T-cell (primary cell): ENCODE measurements at regions of chr6 and their contacts with region 1.

Region 1: DNA sequence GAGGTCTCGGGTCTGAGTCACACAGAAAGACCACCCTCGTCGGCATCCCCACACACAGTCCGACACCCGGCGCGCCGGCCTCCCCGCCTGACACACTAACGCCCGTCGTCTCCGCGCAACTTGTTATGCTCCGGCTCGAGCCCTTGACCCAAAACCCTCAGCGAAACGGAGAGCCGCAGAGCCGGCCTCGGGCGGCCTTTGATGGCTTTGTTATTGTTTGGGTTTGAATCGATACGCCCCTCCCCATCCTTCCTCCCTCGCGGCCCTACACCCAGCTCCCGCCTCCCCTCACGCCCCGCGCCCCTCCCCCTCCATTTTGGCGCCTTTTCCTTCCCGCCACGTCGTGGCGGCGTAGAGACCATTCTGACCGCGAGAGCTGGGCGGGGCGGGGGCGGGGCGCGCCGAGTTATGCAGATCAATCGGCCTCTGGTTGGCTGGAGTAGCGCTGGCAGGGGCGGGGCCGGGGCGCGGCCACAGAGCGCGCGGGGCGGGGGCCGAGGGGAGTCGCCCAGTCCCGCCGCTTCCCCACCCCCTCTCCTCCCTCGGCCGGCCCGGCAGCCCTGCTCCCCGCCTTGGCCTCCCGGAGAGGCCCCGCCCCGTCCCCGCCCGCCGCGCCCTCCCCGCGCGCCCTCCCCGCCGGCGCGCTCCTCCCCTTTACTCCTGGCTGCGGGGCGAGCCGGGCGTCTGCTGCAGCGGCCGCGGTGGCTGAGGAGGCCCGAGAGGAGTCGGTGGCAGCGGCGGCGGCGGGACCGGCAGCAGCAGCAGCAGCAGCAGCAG is at the start of gene PIM1:
- DNase-seq: peak; percentile 89 to 100 (median 99)
- ATAC-seq: peak; percentile 79 to 88 (median 82)
- H3K4me3 ChIP-seq: peak within 1 kb of the TSS; percentile 78 to 90
- H3K4me3 Mint-ChIP-seq: peak within 1 kb of the TSS; percentile 90 to 93 (median 92)
- H3K27ac ChIP-seq: peak within 1 kb of the TSS; percentile 77
- H3K27ac Mint-ChIP-seq: peak within 1 kb of the TSS; percentile 95 to 99
- H3K4me1 ChIP-seq: peaks cover 19 to 36% of the 10 kb centered on the region in 2 experiments
- H3K4me1 Mint-ChIP-seq: peaks cover 37 to 39% (median 39%) of the 10 kb centered on the region in 3 donors
- H3K27me3 ChIP-seq: no peaks in the 10 kb centered on the region
- H3K27me3 Mint-ChIP-seq: no peaks in the 10 kb centered on the region
- total RNA-seq, gene PIM1: 225 to 334 (median 313) TPM

Region 2: DNA sequence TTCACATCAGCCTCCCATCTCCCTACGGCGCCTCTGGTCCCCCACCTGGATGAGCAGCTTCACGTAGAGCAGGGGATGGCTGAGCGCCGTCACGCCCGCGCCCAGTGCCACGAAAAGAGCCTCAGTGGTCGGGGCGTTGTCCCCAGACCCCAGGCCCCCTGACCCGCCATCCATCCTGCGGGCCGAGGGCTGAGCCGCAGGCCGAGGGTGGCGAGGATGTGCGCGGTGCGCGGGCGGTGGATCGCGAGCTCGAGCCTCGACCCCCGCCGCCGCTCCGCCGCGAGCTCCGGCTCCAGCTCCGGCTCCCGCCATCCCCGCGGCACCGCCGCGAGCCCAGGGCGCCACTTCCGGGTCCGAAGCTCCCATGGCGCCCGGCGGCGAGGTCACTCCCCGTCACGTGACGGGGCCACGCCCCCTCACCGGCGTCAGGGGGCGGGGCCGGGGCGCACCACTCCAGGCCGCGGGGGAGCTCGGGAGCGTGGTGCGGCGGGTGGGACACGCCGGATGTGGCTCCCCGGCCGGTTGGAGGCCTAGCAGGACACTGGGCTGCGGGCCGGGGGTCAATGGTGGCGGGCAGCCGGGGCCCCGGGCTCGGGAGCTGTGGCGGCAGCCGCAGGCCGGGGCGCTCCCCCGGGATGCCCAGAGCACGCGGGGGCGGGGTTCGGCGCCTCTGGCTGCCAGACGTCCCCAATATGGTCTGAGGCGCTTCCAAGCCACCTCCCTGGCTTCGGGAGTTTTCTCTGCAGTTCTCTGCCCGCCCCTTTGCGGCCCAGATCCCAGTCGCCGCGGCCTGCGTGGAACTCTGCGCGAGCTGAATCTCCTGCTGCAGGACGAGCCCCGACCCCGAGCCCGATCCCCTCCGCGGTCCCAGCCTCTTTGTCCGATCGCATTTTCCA is 183.6 kb before region 1 on chr6 and contains the start of gene MTCH1:
- CTCF ChIA-PET with region 1: interaction called in 1 of 2 experiments, 3 read pairs
- POLR2A ChIA-PET with region 1: interaction called in 1 of 2 experiments, 10 read pairs
- DNase-seq: peak; percentile 66 to 94 (median 83)
- ATAC-seq: peak; percentile 88 to 91 (median 90)
- H3K4me3 ChIP-seq: peak within 1 kb of the TSS; percentile 94 to 95
- H3K4me3 Mint-ChIP-seq: peak within 1 kb of the TSS in 2 of 3 donors; percentile 95 to 98
- H3K27ac ChIP-seq: peak within 1 kb of the TSS; percentile 65
- H3K27ac Mint-ChIP-seq: peak within 1 kb of the TSS; percentile 94 to 95
- H3K4me1 ChIP-seq: peaks cover 22 to 45% of the 10 kb centered on the region in 2 experiments
- H3K4me1 Mint-ChIP-seq: peaks cover 20 to 31% (median 27%) of the 10 kb centered on the region in 3 donors
- H3K27me3 ChIP-seq: no peaks in the 10 kb centered on the region
- H3K27me3 Mint-ChIP-seq: no peaks in the 10 kb centered on the region
- total RNA-seq, gene MTCH1: 146 to 185 (median 160) TPM

Region 3: GRCh38 chr6:37029249-37029971 is 140.3 kb before region 1 on chr6:
- CTCF ChIA-PET with region 1: interaction called, 4 to 142 read pairs
- POLR2A ChIA-PET with region 1: interaction called in 1 of 2 experiments, 7 read pairs
- DNase-seq: peak in 19 of 35 experiments; percentile 16 to 65 (median 28)
- ATAC-seq: peak; percentile 64 to 75 (median 67)
- H3K4me3 ChIP-seq: no peak overlapping the region
- H3K4me3 Mint-ChIP-seq: no peak overlapping the region
- H3K27ac ChIP-seq: no peak overlapping the region
- H3K27ac Mint-ChIP-seq: peak overlapping the region; percentile 2 to 61
- H3K4me1 ChIP-seq: peaks cover 0 to 16% of the 10 kb centered on the region in 2 experiments
- H3K4me1 Mint-ChIP-seq: peaks cover 25 to 47% (median 28%) of the 10 kb centered on the region in 3 donors
- H3K27me3 ChIP-seq: no peaks in the 10 kb centered on the region
- H3K27me3 Mint-ChIP-seq: no peaks in the 10 kb centered on the region

Region 4: GRCh38 chr6:37102279-37103168 is 67.2 kb before region 1 on chr6:
- CTCF ChIA-PET with region 1: interaction called in 1 of 2 experiments, 4 read pairs
- POLR2A ChIA-PET with region 1: interaction called, 5 to 14 read pairs
- DNase-seq: peak; percentile 29 to 86 (median 73)
- ATAC-seq: peak; percentile 86 to 94 (median 88)
- H3K4me3 ChIP-seq: peak overlapping the region; percentile 36 to 66
- H3K4me3 Mint-ChIP-seq: peak overlapping the region; percentile 54 to 70 (median 69)
- H3K27ac ChIP-seq: peak overlapping the region; percentile 79
- H3K27ac Mint-ChIP-seq: peak overlapping the region; percentile 77
- H3K4me1 ChIP-seq: peaks cover 22 to 24% of the 10 kb centered on the region in 2 experiments
- H3K4me1 Mint-ChIP-seq: peaks cover 21 to 36% (median 28%) of the 10 kb centered on the region in 3 donors
- H3K27me3 ChIP-seq: no peaks in the 10 kb centered on the region
- H3K27me3 Mint-ChIP-seq: no peaks in the 10 kb centered on the region

Region 5: GRCh38 chr6:37190159-37190535 is 20.5 kb after region 1 on chr6:
- CTCF ChIA-PET with region 1: interaction called in 1 of 2 experiments, 6 read pairs
- POLR2A ChIA-PET with region 1: interaction called in 1 of 2 experiments, 11 read pairs
- DNase-seq: no peak
- ATAC-seq: no peak
- H3K4me3 ChIP-seq: no peak overlapping the region
- H3K4me3 Mint-ChIP-seq: peak overlapping the region in 1 of 3 donors; percentile 35
- H3K27ac ChIP-seq: no peak overlapping the region
- H3K27ac Mint-ChIP-seq: peak overlapping the region; percentile 66 to 73
- H3K4me1 ChIP-seq: peaks cover 17 to 51% of the 10 kb centered on the region in 2 experiments
- H3K4me1 Mint-ChIP-seq: peaks cover 54 to 77% (median 69%) of the 10 kb centered on the region in 3 donors
- H3K27me3 ChIP-seq: no peaks in the 10 kb centered on the region
- H3K27me3 Mint-ChIP-seq: no peaks in the 10 kb centered on the region